ENCODE measurements at regions of chr6 and their contacts with region 1.

Region 1: GRCh38 chr6:123380257-123380656 is 256.5 kb downstream of the TRDN start:
- DNase-seq: peak in 1 of 2 experiments; percentile 3
- H3K4me3 ChIP-seq: no peak overlapping the region
- H3K27ac ChIP-seq: no peak overlapping the region
- H3K4me1 ChIP-seq: no peaks in the 10 kb centered on the region
- H3K27me3 ChIP-seq: no peaks in the 10 kb centered on the region
- CTCF ChIP-seq: peak in 2 of 3 experiments; percentile 42 to 45; a peak in 3 of 4 replicates
- EP300 ChIP-seq: no peak
- POLR2A ChIP-seq: no peak
- RAD21 ChIP-seq: peak; percentile 66 to 71

Region 2: DNA sequence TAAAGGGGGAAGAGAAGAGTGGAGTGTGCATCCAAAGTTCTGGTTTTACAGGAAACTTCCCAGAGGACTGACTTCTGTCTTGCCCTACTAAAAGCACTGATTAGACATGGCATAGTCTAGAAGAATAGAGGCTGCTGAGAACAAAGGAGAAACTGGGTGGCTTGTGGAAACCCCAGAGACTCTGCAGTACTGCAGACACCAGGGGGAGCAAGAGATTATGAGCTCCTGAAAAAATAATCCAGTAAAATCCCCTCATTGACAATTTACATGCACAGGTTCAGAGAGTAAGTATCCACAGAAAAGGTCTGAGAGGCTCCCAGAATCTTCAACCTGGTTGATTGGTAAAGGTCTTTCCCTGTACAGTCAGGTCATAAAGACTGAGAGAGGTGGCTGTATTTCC is 432.9 kb before region 1 on chr6:
- CTCF ChIA-PET with region 1: interaction called, 10 read pairs
- POLR2A ChIA-PET with region 1: no interaction called
- DNase-seq: peak in 1 of 2 experiments; percentile 47
- H3K4me3 ChIP-seq: no peak overlapping the region
- H3K27ac ChIP-seq: no peak overlapping the region
- H3K4me1 ChIP-seq: no peaks in the 10 kb centered on the region
- H3K27me3 ChIP-seq: no peaks in the 10 kb centered on the region
- CTCF ChIP-seq: peak; percentile 19 to 64 (median 63)
- EP300 ChIP-seq: no peak
- POLR2A ChIP-seq: no peak
- RAD21 ChIP-seq: peak; percentile 69 to 72

Region 3: DNA sequence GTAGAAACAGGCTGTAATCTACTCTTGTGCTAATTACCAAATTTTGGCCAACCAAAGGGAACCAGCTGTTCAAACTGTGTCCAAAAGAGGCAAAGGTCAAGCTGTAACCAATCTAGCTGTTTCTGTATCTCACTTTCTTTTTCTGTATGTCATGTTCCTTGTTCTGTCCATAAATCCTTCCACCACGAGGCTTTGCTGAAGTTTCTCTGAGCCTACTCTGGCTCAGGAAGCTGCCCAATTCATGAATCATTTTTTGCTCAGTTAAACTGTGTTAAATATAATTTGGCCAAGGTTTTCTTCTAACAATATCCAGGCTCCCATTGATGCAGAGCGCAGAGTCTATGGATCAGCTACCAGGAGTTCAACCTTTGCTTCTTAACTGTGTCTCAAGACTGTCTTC is 16.3 kb before region 1 on chr6:
- CTCF ChIA-PET with region 1: interaction called, 10 read pairs
- POLR2A ChIA-PET with region 1: no interaction called
- DNase-seq: no peak
- H3K4me3 ChIP-seq: no peak overlapping the region
- H3K27ac ChIP-seq: no peak overlapping the region
- H3K4me1 ChIP-seq: no peaks in the 10 kb centered on the region
- H3K27me3 ChIP-seq: no peaks in the 10 kb centered on the region
- CTCF ChIP-seq: no peak
- EP300 ChIP-seq: no peak
- POLR2A ChIP-seq: no peak
- RAD21 ChIP-seq: no peak

Region 4: DNA sequence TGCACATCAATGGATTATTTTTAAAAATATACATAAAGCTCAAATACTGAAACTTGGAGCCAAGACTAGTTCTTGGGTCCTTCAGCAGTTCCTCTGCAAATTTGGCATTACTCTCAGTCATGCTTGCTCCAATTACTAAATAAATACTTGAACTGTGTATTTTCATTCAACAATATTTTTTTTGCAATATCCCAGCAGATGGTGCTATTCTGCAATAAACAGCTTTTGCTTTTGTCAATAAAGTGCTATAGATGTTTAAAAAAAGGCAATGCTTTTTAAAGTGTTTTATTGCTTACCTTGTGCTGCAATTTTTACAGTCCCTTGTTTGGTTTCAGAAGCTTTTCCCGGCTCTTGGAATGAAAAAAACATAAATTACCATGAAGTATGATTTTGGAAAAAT is 13.1 kb after region 1 on chr6:
- CTCF ChIA-PET with region 1: interaction called, 12 read pairs
- POLR2A ChIA-PET with region 1: no interaction called
- DNase-seq: no peak
- H3K4me3 ChIP-seq: no peak overlapping the region
- H3K27ac ChIP-seq: no peak overlapping the region
- H3K4me1 ChIP-seq: no peaks in the 10 kb centered on the region
- H3K27me3 ChIP-seq: no peaks in the 10 kb centered on the region
- CTCF ChIP-seq: peak in 1 of 3 experiments; percentile 26; a peak in 2 of 4 replicates
- EP300 ChIP-seq: no peak
- POLR2A ChIP-seq: no peak
- RAD21 ChIP-seq: peak; percentile 50 to 61

Region 5: GRCh38 chr6:123420512-123420911 is 40.3 kb after region 1 on chr6:
- CTCF ChIA-PET with region 1: no interaction called
- POLR2A ChIA-PET with region 1: no interaction called
- DNase-seq: no peak
- H3K4me3 ChIP-seq: no peak overlapping the region
- H3K27ac ChIP-seq: no peak overlapping the region
- H3K4me1 ChIP-seq: peaks cover 0 to 14% (median 2%) of the 10 kb centered on the region in 4 experiments; a peak in 2 of 7 replicates
- H3K27me3 ChIP-seq: no peaks in the 10 kb centered on the region
- CTCF ChIP-seq: no peak
- EP300 ChIP-seq: no peak
- POLR2A ChIP-seq: no peak
- RAD21 ChIP-seq: no peak

Region 6: DNA sequence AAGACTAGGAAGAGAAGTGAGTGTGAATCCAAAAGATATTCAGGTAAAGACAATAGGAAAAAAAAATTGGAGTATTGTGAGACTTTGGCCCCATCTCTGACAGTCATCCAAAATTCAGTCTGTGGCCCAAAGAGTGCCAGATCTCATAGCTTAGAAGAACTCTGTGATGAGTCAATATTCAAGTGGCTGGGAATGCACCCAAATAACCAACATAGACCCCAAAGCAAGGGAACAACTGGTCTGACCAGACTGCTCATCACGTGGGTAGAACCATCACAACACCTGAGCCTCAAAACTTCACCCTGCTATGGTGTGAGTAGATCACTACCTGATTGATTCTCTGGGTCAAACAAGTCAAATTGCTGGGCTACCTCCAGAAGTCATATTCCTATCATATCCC is 307.6 kb after region 1 on chr6:
- CTCF ChIA-PET with region 1: no interaction called
- POLR2A ChIA-PET with region 1: no interaction called
- DNase-seq: no peak
- H3K4me3 ChIP-seq: no peak overlapping the region
- H3K27ac ChIP-seq: no peak overlapping the region
- H3K4me1 ChIP-seq: no peaks in the 10 kb centered on the region
- H3K27me3 ChIP-seq: no peaks in the 10 kb centered on the region
- CTCF ChIP-seq: no peak
- EP300 ChIP-seq: no peak
- POLR2A ChIP-seq: no peak
- RAD21 ChIP-seq: no peak

Measured in H1 (cell line).